GM23248 (cell line): ENCODE measurements at regions of chr3 and their contacts with region 1.

Region 1: GRCh38 chr3:108552267-108553159 is 36.7 kb downstream of the CIP2A start:
- DNase-seq: peak; percentile 65
- H3K4me3 ChIP-seq: no peak overlapping the region
- H3K27ac ChIP-seq: no peak overlapping the region
- H3K4me1 ChIP-seq: peaks cover 8% of the 10 kb centered on the region
- H3K27me3 ChIP-seq: no peaks in the 10 kb centered on the region

Region 2: DNA sequence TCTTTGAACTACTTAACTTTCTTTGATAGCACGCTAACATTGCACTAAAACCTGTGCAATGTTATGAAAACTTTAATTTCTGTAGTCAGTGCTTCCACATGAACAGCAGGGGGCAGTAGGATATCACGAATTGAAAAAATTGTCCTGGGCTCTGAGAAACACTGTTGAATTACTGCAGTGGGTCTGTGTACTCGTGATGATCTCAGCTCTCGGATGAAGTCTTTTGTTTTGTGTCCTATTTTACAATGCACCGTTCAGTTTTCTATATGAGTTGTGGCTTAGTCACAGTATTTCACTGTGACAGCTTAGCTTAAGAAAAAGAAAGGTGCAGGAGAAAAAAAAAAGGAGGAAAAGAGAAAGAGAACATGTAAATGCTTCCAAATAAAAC is 1316.6 kb before region 1 on chr3:
- in situ Hi-C with region 1: loop called (anchors 25 kb)
- DNase-seq: peak; percentile 88
- H3K4me3 ChIP-seq: peak overlapping the region; percentile 90
- H3K27ac ChIP-seq: peak overlapping the region; percentile 43
- H3K4me1 ChIP-seq: peaks cover 7% of the 10 kb centered on the region; the same call in 1 of the 2 replicates
- H3K27me3 ChIP-seq: no peaks in the 10 kb centered on the region

Region 3: GRCh38 chr3:109081746-109082510 is 529.4 kb after region 1 on chr3:
- in situ Hi-C with region 1: no loop called
- DNase-seq: peak; percentile 51
- H3K4me3 ChIP-seq: no peak overlapping the region
- H3K27ac ChIP-seq: no peak overlapping the region
- H3K4me1 ChIP-seq: no peaks in the 10 kb centered on the region
- H3K27me3 ChIP-seq: no peaks in the 10 kb centered on the region